ENCODE measurements at regions of chr10 and their contacts with region 1.

Region 1: GRCh38 chr10:49362596-49363260 is 33.2 kb downstream of the DRGX start:
- H3K4me3 Mint-ChIP-seq: peak overlapping the region; percentile 53
- H3K27ac Mint-ChIP-seq: peak overlapping the region; percentile 94
- H3K4me1 Mint-ChIP-seq: peaks cover 76% of the 10 kb centered on the region
- H3K27me3 Mint-ChIP-seq: peaks cover 18% of the 10 kb centered on the region

Region 2: GRCh38 chr10:49177391-49178355 is 185.1 kb before region 1 on chr10:
- intact Hi-C with region 1: loop called (anchors 5 kb)
- H3K4me3 Mint-ChIP-seq: peak overlapping the region; percentile 61
- H3K27ac Mint-ChIP-seq: peak overlapping the region; percentile 95
- H3K4me1 Mint-ChIP-seq: peaks cover 96% of the 10 kb centered on the region
- H3K27me3 Mint-ChIP-seq: no peaks in the 10 kb centered on the region

Region 3: DNA sequence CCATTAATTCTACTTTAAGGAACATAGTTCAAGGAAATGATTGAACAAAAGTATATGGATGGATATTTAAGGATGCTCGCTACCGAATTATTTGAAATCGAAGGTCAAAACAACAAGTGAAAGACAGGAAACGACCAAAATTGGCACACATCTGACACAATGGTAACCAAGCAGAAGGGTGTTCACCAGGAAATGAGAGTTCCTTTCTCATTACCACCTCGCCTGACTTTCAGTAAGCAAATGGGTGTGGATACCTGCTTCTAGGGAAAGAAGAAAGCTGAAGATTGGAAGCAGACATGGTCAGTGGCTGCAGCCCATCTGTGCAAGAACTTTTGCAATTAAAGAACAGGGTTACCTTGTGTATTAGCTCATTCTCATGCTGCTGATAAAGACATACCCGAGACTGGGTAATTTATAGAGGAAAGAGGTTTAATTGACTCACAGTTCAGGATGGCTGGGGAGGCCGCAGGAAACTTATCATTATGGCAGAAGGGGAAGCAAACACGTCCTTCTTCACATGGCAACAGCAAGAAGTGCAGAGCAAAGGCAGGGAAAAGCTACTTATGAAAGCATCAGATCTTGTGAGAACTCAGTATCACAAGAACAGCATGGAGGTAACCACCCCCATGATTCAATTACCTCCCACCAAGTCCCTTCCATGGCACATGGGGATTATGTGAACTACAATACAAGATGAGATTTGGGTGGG is 168.4 kb before region 1 on chr10:
- intact Hi-C with region 1: loop called (anchors 5 kb)
- H3K4me3 Mint-ChIP-seq: no peak overlapping the region
- H3K27ac Mint-ChIP-seq: peak overlapping the region; percentile 35
- H3K4me1 Mint-ChIP-seq: peaks cover 30% of the 10 kb centered on the region
- H3K27me3 Mint-ChIP-seq: peaks cover 7% of the 10 kb centered on the region

Region 4: DNA sequence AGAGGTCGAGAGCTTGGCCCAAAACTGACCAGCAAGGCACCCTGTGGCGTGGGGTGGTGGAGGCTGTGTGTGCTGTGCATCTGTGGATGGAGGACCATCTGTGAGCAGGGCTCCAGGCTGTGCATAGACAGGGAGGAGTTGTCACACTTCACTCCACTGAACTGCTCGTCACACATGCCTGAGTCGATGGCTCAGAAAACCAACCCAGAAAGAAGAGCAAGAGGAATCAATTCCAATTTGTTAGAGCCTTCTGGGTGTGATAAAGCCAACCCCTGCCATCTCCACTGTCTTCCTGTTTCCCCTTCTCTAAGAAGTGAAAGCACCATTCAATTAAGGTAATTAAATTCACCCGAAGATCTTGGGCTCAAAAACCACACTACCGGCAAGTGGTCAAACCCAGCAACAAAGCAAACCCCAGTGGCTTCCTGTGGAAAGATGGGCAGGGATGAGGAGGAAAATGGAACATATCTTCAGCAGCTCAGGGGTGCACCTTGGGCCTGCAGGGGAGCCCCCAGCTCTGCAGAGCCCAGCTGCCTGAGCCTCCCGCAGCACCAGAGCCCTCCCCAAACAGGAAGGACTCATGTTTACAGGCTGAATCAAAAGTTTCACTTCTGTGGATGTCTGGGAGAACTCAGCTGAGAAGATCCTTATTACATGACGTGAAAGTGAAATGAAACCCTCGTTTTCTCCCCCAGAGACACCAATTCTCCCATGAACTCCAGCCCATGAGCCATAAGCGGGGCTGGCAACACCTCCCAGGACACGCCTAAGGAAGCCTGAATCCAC is 52.9 kb before region 1 on chr10:
- intact Hi-C with region 1: loop called (anchors 5 kb)
- H3K4me3 Mint-ChIP-seq: peak overlapping the region; percentile 51
- H3K27ac Mint-ChIP-seq: peak overlapping the region; percentile 68
- H3K4me1 Mint-ChIP-seq: peaks cover 67% of the 10 kb centered on the region
- H3K27me3 Mint-ChIP-seq: peaks cover 35% of the 10 kb centered on the region

Region 5: DNA sequence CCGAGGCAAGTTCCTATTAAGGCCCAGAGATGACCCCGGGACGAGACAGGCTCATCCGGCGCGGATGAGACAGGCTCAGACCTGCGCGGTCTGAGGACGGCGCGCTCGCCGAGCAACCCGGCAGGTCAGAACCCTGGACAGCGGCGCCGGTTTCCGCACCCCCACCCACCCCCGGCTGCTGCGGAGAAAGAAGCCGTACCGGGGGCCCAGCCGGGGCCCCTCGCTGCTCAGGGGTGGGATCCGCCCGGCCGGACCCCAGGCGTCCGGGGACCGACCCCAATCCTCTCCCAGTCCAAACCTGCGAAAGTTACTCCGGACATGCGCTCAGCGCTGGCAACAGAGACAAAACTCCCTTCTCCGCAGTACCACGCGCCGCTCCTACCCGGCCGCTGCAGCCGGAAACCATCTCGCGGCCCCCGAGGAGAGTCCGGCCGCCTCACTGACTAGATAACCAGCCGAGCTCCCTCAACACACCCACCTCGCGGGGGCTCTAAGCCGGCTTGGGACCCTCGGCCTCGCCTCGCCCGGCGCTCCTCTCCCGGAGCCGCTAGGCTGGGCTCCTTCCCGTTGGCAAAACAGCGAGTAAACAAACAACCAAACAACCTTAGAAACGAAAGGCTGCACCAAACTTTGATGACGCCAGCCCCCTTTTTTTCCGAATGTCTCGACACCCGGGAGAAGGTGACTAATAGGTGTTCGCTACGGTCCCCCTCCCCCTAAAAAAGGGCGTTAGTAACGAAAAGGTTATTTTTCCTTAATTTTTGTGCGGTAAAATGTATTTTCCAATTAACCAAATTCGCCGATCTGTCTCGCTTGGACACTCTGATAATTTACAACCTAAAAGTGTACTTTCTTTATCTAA is 35.5 kb after region 1 on chr10:
- intact Hi-C with region 1: loop called (anchors 5 kb)
- H3K4me3 Mint-ChIP-seq: peak overlapping the region; percentile 51
- H3K27ac Mint-ChIP-seq: peak overlapping the region; percentile 39
- H3K4me1 Mint-ChIP-seq: peaks cover 31% of the 10 kb centered on the region
- H3K27me3 Mint-ChIP-seq: peaks cover 89% of the 10 kb centered on the region

Region 6: GRCh38 chr10:49474901-49475300 is 112.2 kb after region 1 on chr10:
- intact Hi-C with region 1: no loop called
- H3K4me3 Mint-ChIP-seq: no peak overlapping the region
- H3K27ac Mint-ChIP-seq: no peak overlapping the region
- H3K4me1 Mint-ChIP-seq: no peaks in the 10 kb centered on the region
- H3K27me3 Mint-ChIP-seq: no peaks in the 10 kb centered on the region

Measured in dendritic cell treated with granulocyte-macrophage colony-stimulating factor and Interleukin-4, amounts not matched to agents 40 ng/mL and 50 ng/mL, for 4 days (primary cell).